Head of caudate nucleus (tissue), 42 donors: ENCODE measurements at regions of chr22 and their contacts with region 1.

Region 1: GRCh38 chr22:32796865-32797573 is 4.5 kb upstream of the TIMP3 start:
- DNase-seq: peak; percentile 63 to 92 (median 83)

Region 2: GRCh38 chr22:32660292-32660691 is 136.7 kb before region 1 on chr22:
- intact Hi-C with region 1: loop called (anchors 2 kb)
- DNase-seq: peak in 40 of 42 donors; percentile 24 to 84 (median 58)

Region 3: DNA sequence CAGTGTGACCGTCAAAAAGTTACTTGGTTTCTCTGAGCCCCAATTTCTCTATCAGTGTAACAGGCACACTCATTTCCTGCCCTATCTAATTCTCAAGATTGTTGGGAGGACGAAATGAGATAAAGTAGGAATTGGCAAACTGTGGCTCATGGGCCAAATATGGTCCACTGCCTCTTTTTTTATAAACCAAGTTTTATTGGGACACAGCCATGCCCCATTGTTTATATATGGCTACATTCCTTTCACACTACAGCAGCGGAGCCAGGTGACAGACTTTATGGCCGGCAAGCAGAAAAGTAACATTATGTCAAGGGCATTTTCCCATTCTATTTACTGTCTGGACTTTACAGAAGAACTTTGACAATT is 112.2 kb before region 1 on chr22:
- intact Hi-C with region 1: no loop called
- DNase-seq: no peak

Region 4: GRCh38 chr22:32991353-32992121 is 194.5 kb after region 1 on chr22:
- intact Hi-C with region 1: loop called (anchors 10 kb)
- DNase-seq: peak in 2 of 42 donors; percentile 7 to 35